H1 (cell line): ENCODE measurements at regions of chr1 and their contacts with region 1.

Region 1: GRCh38 chr1:165597883-165598675 is 33.0 kb upstream of the MGST3 start:
- DNase-seq: peak; percentile 80 to 94
- H3K4me3 ChIP-seq: peak overlapping the region; percentile 78 to 95 (median 85)
- H3K27ac ChIP-seq: peak overlapping the region; percentile 56; the same call in 1 of the 2 replicates
- H3K4me1 ChIP-seq: peaks cover 0 to 4% (median 1%) of the 10 kb centered on the region in 4 experiments; a peak in 1 of 7 replicates
- H3K27me3 ChIP-seq: no peaks in the 10 kb centered on the region
- CTCF ChIP-seq: no peak
- EP300 ChIP-seq: no peak
- POLR2A ChIP-seq: peak in 1 of 2 experiments; percentile 40; a peak in 1 of 3 replicates
- RAD21 ChIP-seq: no peak

Region 2: DNA sequence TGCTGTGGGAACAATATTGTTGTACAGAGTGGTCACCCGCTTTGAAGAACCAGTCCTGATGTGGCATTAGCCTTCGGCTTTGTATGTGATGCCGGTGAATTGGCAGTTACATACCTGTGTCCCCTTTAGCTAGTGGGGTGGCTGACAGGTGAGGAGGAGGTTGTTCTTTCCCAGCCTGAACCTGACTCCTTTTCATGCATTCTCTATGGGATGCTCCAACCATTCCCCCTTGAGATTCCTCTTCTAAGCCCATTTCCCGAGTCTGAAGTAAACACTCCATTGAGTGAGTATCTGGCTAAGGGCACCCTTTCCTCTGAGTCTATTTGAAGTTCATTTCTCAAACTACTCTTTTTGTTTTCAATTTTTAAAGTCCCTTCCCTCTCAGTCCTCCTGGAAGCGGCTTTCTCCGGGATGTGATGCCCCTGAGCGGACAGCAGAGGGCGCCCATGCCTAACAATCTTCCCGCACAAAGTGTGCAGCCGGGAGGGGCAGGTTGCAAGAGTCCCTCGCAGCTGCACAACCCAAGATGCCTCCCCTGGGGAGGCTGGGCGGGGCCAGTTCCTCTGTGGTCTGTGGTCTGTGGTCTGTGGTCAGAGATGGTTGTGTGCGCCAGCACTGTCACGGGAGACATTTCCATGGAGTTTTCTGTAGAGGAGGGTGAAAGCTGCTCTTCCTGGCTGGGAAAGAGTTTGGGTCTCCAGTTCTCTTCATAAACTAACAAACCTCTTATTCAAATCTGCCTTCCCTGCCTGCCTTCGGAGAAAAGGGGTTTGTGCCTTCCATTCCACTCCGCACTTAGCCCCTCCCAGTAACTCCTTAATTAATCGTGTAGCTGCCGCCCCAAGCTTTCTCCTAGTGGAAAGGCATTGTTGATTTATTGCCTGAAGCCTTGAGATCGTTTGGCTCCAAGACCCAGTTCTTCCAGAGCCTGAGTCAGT is 205.2 kb before region 1 on chr1:
- CTCF ChIA-PET with region 1: interaction called, 220 read pairs
- POLR2A ChIA-PET with region 1: no interaction called
- DNase-seq: peak in 1 of 2 experiments; percentile 88
- H3K4me3 ChIP-seq: peak overlapping the region in 3 of 4 experiments; percentile 17 to 50 (median 34); a peak in 6 of 8 replicates
- H3K27ac ChIP-seq: no peak overlapping the region
- H3K4me1 ChIP-seq: no peaks in the 10 kb centered on the region; a peak in 1 of 7 replicates
- H3K27me3 ChIP-seq: no peaks in the 10 kb centered on the region; a peak in 1 of 7 replicates
- CTCF ChIP-seq: peak; percentile 85 to 92 (median 88)
- EP300 ChIP-seq: peak in 1 of 2 experiments; percentile 14; a peak in 1 of 3 replicates
- POLR2A ChIP-seq: no peak
- RAD21 ChIP-seq: peak; percentile 92 to 94

Region 3: DNA sequence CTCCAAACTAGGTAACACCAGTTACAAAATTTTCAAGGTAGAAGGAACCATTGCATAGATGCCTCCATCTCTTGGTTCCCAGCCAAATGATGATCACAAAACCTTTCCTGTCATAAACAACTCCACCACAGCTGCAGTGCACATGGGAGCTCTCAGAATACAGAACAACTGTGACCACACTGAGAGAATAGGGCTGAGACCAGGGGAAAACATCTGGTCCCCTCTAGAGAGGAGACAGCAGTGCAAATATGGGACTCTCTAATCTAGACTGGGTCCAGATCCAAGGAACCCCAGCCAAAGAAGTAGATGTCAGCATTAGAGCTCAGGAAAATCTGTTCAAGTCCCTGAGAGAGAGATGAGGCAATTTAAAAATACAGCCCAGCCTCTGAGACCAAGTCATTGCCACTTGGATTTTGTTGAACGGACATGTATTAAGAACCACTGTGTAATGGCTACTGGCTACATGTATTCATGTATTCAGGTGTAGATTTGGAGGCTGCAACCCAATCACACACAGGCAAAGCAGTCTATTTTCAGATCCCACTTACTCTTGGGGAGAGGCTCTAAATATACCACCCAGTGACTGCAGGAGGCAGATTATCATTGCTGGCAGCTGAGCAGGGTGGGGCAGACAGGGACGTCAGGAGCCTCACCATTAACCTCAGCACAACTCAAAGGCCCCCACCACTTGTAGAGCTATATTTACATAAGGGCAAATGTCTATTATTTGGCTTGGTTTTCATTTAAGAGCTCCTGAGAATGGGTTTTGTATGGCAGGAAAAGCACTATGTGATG is 145.5 kb before region 1 on chr1:
- CTCF ChIA-PET with region 1: interaction called, 14 read pairs
- POLR2A ChIA-PET with region 1: no interaction called
- DNase-seq: no peak
- H3K4me3 ChIP-seq: no peak overlapping the region
- H3K27ac ChIP-seq: no peak overlapping the region
- H3K4me1 ChIP-seq: no peaks in the 10 kb centered on the region
- H3K27me3 ChIP-seq: peaks cover 3 to 9% (median 6%) of the 10 kb centered on the region in 4 experiments; a peak in 5 of 7 replicates
- CTCF ChIP-seq: no peak
- EP300 ChIP-seq: no peak
- POLR2A ChIP-seq: no peak
- RAD21 ChIP-seq: no peak; a peak in 1 of 4 replicates

Region 4: DNA sequence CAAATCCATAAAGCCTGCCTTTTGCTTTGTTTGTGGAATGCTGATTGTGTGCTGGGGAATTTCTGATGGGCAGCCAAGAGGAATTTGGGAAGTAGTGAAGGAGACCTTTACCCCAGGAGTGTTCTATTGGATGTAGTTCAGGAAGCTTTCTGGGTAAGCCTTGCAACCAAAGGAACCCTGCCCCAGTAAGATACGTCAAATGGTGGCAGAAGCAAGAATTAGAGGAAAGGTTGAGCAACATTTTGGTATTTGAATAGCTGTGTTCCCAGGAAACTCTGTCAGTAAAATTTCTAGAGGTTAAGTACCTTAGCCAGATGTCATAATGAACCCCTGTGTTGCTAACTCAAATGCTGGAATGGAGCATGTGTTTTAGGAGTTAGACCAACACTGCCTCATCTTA is 39.3 kb after region 1 on chr1:
- CTCF ChIA-PET with region 1: interaction called, 18 read pairs
- POLR2A ChIA-PET with region 1: no interaction called
- DNase-seq: no peak
- H3K4me3 ChIP-seq: no peak overlapping the region
- H3K27ac ChIP-seq: no peak overlapping the region
- H3K4me1 ChIP-seq: peaks cover 3 to 17% (median 4%) of the 10 kb centered on the region in 4 experiments; a peak in 4 of 7 replicates
- H3K27me3 ChIP-seq: no peaks in the 10 kb centered on the region
- CTCF ChIP-seq: no peak
- EP300 ChIP-seq: no peak
- POLR2A ChIP-seq: no peak
- RAD21 ChIP-seq: no peak

Region 5: DNA sequence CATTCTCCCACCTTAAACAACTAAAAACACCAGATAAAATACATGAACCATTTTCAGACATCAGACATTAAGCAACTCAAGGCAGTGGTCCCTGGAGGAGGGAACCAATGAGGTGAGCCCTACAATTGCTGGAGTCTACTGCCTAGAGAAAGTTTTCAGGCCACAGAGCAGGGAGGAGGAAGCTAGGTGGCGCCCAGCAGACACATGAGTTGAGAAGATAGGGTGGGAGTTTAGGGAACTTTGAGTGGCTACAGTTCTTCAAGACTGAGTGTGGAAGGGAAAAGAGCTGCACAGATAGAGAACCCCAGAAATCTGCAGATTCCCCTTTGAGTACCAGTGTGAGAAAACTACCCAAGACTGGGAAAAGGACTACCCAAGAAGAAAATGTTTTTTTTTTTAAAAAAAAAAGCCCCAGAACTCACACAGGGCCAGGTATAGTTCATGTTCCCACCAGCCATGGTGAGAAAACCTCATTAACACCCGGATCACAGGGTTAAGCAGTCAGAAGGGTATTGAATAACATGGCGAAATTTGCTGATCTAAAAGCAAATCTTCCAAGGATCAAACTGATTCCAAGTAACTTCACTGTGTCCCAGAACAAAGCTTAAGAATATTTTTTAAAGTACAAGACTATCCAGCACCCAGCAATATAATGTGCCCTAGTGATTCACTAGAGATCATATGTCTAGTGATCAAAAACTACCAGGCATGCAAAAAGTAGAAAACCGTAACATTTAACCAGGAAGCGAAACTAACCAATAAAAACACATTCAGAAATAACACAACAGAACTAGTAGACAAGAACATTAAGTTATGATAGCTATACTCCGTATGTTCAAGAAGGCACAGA is 88.3 kb after region 1 on chr1:
- CTCF ChIA-PET with region 1: interaction called, 26 read pairs
- POLR2A ChIA-PET with region 1: no interaction called
- DNase-seq: peak in 1 of 2 experiments; percentile 19
- H3K4me3 ChIP-seq: no peak overlapping the region
- H3K27ac ChIP-seq: no peak overlapping the region
- H3K4me1 ChIP-seq: no peaks in the 10 kb centered on the region
- H3K27me3 ChIP-seq: no peaks in the 10 kb centered on the region
- CTCF ChIP-seq: peak; percentile 47 to 52 (median 48)
- EP300 ChIP-seq: no peak
- POLR2A ChIP-seq: no peak
- RAD21 ChIP-seq: peak; percentile 54 to 55

Region 6: DNA sequence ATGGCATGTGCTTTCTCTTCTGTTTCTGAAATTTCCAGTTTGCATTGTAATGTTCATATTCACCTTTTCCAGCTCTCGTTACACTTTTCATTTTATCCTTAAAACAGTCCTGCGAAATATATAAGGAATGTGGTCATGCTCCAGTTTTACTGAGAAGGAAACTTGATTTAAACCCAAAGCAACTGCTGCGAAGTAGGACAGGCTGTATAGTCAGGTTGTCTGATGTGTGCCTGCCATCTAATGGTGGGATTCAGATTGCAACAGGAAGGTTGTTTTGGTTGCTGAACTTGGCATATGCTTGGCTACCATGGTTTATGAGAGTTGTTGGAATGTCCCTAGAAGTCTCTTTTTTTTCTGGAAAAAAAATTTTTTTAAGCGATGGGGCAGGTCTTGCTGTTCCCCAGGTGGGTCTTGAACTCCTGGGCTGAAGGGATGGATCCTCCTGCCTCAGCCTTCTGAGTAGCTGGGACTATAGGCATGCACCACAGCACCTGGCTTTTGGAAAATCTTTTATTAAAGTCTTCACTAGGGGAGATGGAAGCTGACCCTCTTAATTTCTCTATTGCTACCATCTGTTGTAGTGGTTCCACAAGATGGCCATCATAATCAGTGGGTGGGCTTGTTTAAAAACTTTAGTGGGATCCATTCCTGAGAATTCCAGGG is 316.2 kb after region 1 on chr1:
- CTCF ChIA-PET with region 1: interaction called, 47 read pairs
- POLR2A ChIA-PET with region 1: no interaction called
- DNase-seq: peak in 1 of 2 experiments; percentile 72
- H3K4me3 ChIP-seq: no peak overlapping the region
- H3K27ac ChIP-seq: no peak overlapping the region
- H3K4me1 ChIP-seq: no peaks in the 10 kb centered on the region
- H3K27me3 ChIP-seq: no peaks in the 10 kb centered on the region
- CTCF ChIP-seq: peak; percentile 15 to 90 (median 83)
- EP300 ChIP-seq: no peak
- POLR2A ChIP-seq: no peak
- RAD21 ChIP-seq: peak; percentile 95